Transverse colon (tissue), 4 donors: ENCODE measurements at regions of chr3 and their contacts with region 1.

Region 1: DNA sequence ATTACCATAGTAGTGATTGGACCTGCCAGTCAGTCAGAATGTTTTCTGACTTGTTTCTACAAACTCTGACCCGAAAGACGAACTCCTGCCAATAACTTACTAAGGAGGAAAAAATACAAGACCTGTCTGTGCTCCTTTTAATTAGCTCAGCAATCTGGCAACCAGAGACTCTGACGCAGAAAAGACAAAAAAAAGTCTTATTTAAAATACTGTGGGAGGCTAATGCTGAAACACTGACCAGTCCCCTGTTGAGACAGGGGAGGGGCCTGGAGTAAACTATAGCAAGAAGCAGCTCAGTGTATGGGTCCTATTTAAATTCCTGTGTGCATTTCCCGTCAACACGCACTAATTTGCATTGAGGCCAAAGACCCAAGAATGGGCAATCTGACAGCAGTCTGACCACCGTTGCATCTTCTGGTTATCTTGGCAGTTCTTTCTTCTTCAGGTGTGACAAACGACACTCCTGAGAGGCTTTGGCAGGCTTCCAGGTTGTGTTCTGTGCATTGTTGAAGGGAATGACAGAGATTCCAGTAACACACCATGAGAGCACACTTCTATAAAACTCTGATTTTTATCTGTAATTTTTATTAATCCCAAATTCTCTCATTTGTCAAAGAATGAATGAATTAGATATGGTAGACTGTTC is 1114.3 kb downstream of the IGSF11 start:
- DNase-seq: no peak
- H3K4me3 ChIP-seq: no peak overlapping the region
- H3K27ac ChIP-seq: no peak overlapping the region
- H3K4me1 ChIP-seq: no peaks in the 10 kb centered on the region
- H3K27me3 ChIP-seq: no peaks in the 10 kb centered on the region
- CTCF ChIP-seq: no peak
- EP300 ChIP-seq: no peak
- POLR2A ChIP-seq: no peak

Region 2: GRCh38 chr3:118117066-118117465 is 196.7 kb after region 1 on chr3:
- in situ Hi-C with region 1: no loop called
- intact Hi-C with region 1: loop called (anchors 2 kb)
- DNase-seq: no peak
- H3K4me3 ChIP-seq: no peak overlapping the region
- H3K27ac ChIP-seq: no peak overlapping the region
- H3K4me1 ChIP-seq: no peaks in the 10 kb centered on the region
- H3K27me3 ChIP-seq: no peaks in the 10 kb centered on the region
- CTCF ChIP-seq: no peak
- EP300 ChIP-seq: no peak
- POLR2A ChIP-seq: no peak

Region 3: GRCh38 chr3:118480101-118480860 is 559.9 kb after region 1 on chr3:
- in situ Hi-C with region 1: no loop called
- intact Hi-C with region 1: loop called (anchors 10 kb)
- DNase-seq: no peak
- H3K4me3 ChIP-seq: no peak overlapping the region
- H3K27ac ChIP-seq: no peak overlapping the region
- H3K4me1 ChIP-seq: no peaks in the 10 kb centered on the region
- H3K27me3 ChIP-seq: no peaks in the 10 kb centered on the region
- CTCF ChIP-seq: no peak
- EP300 ChIP-seq: no peak
- POLR2A ChIP-seq: no peak